ENCODE measurements at regions of chr3 and their contacts with region 1.

Region 1: DNA sequence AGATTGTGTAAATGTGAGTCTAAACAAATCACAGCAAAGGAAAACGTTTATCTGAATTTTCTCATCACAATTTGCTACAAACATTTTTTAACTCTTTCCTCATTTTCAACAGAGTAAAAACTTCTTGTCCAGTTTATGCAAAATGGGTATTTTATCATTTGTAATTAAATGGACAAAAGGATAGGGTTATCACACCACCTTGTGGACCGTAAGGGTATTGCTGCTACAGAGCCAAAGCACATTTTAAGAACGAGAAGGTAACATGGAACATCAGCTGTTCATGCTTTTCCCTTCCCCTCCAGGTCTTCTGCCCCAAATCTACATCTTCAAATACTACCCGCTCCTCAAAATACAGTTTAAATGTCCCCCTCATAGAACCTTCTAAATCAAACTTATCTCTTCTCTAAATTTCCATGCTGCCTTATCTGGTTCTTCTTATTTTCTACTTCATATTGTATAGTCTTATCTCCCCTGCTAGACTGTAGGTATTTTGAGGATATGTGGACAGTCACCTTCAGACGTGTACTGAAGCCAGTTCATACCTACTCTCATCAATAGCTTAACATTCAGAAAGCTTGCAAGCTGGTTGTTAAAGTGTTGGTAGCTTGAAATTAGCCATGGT is 12.8 kb upstream of the SETMAR start:
- DNase-seq: no peak
- ATAC-seq: no peak
- H3K4me3 ChIP-seq: no peak overlapping the region
- H3K27ac ChIP-seq: no peak overlapping the region
- H3K4me1 ChIP-seq: no peaks in the 10 kb centered on the region
- H3K27me3 ChIP-seq: no peaks in the 10 kb centered on the region
- CTCF ChIP-seq: peak; percentile 89 to 97 (median 92)
- POLR2A ChIP-seq: no peak

Region 2: GRCh38 chr3:3984053-3984452 is 306.3 kb before region 1 on chr3:
- intact Hi-C with region 1: no loop called
- DNase-seq: no peak
- ATAC-seq: no peak
- H3K4me3 ChIP-seq: no peak overlapping the region
- H3K27ac ChIP-seq: no peak overlapping the region
- H3K4me1 ChIP-seq: no peaks in the 10 kb centered on the region
- H3K27me3 ChIP-seq: no peaks in the 10 kb centered on the region
- CTCF ChIP-seq: no peak
- POLR2A ChIP-seq: no peak

Region 3: GRCh38 chr3:4021162-4021561 is 269.2 kb before region 1 on chr3:
- intact Hi-C with region 1: loop called in 1 of 10 experiments (anchors 10 kb)
- DNase-seq: no peak
- ATAC-seq: no peak
- H3K4me3 ChIP-seq: no peak overlapping the region
- H3K27ac ChIP-seq: no peak overlapping the region
- H3K4me1 ChIP-seq: peaks cover 0 to 4% (median 0%) of the 10 kb centered on the region in 12 donors
- H3K27me3 ChIP-seq: no peaks in the 10 kb centered on the region
- CTCF ChIP-seq: no peak
- POLR2A ChIP-seq: no peak

Region 4: GRCh38 chr3:4218456-4219226 is 71.7 kb before region 1 on chr3:
- intact Hi-C with region 1: no loop called
- DNase-seq: no peak
- ATAC-seq: no peak
- H3K4me3 ChIP-seq: no peak overlapping the region
- H3K27ac ChIP-seq: no peak overlapping the region
- H3K4me1 ChIP-seq: no peaks in the 10 kb centered on the region
- H3K27me3 ChIP-seq: no peaks in the 10 kb centered on the region
- CTCF ChIP-seq: no peak
- POLR2A ChIP-seq: no peak